Ascending aorta (tissue), 2 donors: ENCODE measurements at regions of chr2 and their contacts with region 1.

Region 1: DNA sequence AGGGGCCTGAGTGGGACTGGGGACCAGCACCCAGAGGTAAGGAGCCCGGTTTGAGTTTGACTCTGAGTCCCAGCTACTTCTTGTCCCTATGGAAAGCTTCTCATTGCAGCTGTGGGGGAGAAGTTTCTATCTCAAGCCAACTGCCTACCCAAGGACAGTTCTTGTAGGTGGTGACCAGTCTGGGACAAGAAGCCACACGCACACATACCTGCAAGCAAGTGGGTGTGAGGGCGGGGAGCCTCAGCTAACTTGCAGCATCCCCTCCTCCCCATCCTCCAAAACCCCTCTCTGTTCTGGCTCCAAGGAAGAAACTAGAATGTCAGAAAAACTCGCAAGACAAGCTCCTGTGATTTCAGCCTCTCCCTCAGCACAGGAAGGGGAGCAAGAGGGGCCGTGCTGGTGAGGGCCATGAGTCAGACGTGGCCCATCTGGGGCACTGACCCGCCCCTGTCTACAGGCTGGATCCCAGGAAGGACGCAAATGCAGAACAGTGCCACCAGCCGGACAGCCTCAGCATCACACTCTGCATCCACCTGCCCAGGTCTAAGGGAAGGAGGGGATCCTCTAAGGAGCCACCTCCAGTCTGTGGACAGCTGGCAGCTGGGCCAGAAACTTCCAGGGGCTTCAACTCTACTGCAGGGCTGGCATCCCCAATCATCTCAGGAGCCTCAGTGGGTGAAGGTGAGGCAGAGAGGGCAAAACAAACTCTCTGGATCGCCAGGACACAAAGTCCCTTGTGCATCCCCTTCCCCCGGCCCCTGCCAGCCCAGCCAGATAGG is 103.4 kb downstream of the TNS1 start:
- DNase-seq: peak in 1 of 2 donors; percentile 93
- H3K4me3 ChIP-seq: peak overlapping the region; percentile 44 to 57
- H3K27ac ChIP-seq: peak overlapping the region; percentile 98 to 100
- H3K4me1 ChIP-seq: peaks cover 38 to 84% of the 10 kb centered on the region in 2 donors
- H3K27me3 ChIP-seq: no peaks in the 10 kb centered on the region
- CTCF ChIP-seq: peak; percentile 82 to 85 (median 84)

Region 2: DNA sequence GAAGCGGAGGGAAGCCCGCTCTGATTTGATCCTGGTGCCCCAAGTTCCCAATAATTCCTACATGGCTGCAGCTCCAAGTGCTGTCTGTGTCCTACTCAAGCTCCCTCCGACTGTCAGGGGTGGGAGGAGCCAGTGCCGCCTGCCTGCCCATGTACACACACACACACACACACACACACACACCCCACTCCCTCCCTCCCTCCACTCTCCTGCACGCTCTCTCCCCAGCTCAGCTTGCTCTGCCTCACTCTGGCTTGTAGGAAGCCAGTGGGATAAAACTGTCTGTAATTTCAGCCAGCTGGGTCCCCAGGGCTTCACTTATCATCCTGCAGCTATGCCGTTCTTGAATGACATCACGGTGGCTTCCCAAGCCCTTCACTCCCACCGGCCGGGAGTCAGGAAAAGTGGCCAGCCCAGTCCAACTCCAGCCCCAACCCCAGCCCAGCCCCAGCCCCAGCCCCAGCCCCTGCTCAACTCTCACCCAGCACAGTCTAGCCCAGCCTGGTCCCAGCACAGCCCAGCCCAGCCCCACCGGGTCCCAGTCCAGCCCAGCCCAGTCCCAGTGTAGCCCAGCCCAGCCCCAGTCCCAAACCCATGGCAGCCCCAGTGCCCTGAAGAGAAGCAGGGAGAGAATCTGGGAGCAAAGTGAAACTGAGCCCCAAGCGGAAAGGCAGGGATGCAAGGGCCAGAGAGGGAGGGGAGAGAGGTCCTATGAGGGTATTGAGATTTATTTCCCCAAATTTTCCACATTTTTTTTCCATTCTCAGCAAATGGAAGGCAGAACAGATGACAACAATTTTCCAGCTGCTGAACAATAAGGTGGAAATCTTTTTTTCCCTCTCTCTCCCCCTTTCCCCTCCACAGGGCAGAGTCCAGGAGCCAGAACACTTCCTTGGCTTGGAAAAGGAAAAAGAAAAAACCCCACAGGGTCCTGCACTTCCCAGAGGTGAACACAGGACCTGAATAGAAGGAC is 40.6 kb before region 1 on chr2:
- intact Hi-C with region 1: loop called (anchors 2 kb)
- DNase-seq: peak; percentile 47 to 96
- H3K4me3 ChIP-seq: peak overlapping the region; percentile 48 to 49
- H3K27ac ChIP-seq: peak overlapping the region; percentile 87 to 89
- H3K4me1 ChIP-seq: peaks cover 68 to 94% of the 10 kb centered on the region in 2 donors
- H3K27me3 ChIP-seq: no peaks in the 10 kb centered on the region
- CTCF ChIP-seq: no peak

Region 3: DNA sequence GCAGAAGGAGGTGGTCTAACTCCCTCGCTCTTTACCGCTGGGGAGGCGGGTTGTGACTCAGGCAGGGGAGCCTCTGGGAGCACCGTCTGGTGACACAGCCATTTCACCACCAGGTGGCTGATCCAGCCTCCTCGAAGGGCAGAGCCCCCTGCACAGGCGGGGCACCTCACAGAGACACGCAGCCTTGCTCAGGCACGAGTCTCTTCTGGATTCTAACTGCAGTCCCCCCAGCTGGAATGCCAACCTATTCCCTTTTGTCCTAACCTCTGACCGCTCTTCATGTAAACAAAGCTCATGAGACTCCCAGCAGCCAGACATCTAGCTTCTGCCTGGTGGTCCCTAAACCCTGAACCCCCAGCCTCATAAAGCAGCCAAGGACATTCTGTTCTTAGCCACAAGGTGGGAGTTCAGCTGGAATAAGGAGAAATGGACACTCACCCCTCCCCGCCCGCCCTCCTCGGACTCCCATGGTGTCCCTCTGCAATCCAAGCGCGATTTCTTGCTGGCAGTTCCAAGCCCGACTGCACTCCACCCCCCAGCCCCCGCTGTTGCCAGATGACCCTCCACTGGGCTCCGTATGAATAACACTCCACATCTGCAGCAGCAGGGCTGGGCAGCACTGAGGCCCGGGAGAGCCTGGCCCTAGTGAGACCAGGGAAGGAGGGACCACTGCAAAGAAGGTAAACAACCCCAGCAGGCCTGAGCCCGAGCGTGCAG is 19.0 kb after region 1 on chr2:
- intact Hi-C with region 1: loop called (anchors 1 kb)
- DNase-seq: no peak
- H3K4me3 ChIP-seq: peak overlapping the region in 1 of 2 donors; percentile 50
- H3K27ac ChIP-seq: peak overlapping the region; percentile 98 to 100
- H3K4me1 ChIP-seq: peaks cover 52 to 95% of the 10 kb centered on the region in 2 donors
- H3K27me3 ChIP-seq: no peaks in the 10 kb centered on the region
- CTCF ChIP-seq: peak in 2 of 3 experiments; percentile 21 to 34

Region 4: DNA sequence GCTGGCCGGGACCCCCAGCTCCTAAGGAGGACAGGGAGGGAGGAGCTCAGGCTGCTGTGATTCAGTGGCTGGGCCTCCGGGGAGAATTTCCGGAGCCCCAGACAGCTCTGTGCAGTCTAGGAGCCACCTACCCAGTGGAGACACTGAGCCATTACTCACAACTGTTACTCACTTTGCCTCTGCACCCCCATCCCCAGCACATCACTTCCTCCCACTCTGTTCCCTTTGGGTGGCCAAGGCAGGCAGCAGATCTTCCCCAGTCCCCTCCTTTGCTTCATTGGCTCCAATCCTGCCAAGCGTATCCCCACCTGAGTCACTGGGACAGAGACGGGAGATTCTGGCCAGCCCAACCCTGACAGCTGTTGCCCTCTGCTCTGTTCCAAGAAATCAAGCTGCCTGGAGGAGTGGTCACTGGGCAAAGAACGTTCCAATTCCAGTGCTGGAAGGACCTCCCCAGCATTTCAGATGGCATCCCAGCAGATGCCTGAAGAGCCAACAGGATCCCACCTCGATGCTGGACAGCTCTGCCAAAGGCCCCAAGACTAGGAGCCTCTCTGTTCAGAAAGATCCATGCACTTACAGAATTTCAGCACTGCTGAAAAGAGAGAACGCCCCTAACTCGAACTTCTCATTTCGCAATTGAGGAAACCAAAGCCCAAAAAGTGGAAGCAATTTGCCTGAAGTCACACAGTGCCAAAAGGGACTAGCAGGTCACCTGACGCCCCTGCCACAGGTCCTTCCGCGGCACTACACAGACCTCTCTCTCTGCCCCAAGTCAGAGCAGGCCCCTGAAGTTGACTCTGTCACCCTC is 35.1 kb after region 1 on chr2:
- intact Hi-C with region 1: loop called (anchors 2 kb)
- DNase-seq: peak; percentile 78 to 94
- H3K4me3 ChIP-seq: peak overlapping the region; percentile 64 to 81
- H3K27ac ChIP-seq: peak overlapping the region; percentile 98 to 100
- H3K4me1 ChIP-seq: peaks cover 46 to 86% of the 10 kb centered on the region in 2 donors
- H3K27me3 ChIP-seq: no peaks in the 10 kb centered on the region
- CTCF ChIP-seq: no peak